Activated CD8-positive, alpha-beta T cell treated with anti-CD3 and anti-CD28 coated beads for 36 hours (primary cell): ENCODE measurements at regions of chr6 and their contacts with region 1.

Region 1: DNA sequence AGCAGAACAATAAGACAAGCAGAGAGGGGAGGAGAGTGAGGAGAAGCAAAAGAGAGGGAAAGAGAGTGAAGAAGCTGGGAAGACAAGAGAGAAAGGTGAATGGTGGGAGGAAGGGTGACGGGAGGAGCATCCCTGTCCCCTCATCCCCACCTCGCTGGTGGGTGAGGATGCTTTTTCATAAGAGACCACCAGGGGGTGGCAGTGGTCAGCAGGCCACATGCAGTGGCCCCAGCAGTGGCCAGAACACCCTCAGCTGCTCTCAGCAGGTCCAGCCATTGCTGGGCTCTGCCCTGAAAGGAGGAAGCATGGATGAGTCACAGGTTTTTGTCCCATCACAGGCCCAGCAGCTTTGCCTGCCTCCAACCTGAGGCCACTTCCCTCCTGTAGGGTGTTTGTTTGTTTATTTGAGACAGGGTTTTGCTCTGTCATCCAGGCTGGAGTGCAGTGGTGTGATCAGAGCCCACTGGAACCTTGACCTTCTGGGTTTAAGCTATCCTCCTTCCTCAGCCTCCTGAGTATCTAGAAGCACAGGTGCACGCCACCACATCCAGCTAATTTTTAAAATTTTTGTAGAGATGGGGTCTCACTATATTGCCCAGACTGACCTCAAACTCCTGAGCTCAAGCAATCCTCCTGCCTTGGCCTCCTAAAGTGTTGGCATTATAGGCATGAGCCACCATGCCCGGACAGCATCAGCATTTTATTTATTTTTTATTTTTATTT is 24.0 kb downstream of the FGD2 start:
- DNase-seq: peak; percentile 70
- ATAC-seq: peak; percentile 25
- H3K4me3 Mint-ChIP-seq: no peak overlapping the region
- H3K27ac Mint-ChIP-seq: peak overlapping the region; percentile 67
- H3K4me1 Mint-ChIP-seq: peaks cover 65% of the 10 kb centered on the region
- H3K27me3 Mint-ChIP-seq: no peaks in the 10 kb centered on the region
- CTCF ChIP-seq: peak; percentile 58

Region 2: GRCh38 chr6:36788768-36789167 is 240.6 kb before region 1 on chr6:
- CTCF ChIA-PET with region 1: no interaction called
- POLR2A ChIA-PET with region 1: no interaction called
- intact Hi-C with region 1: no loop called
- DNase-seq: peak; percentile 32
- ATAC-seq: no peak
- H3K4me3 Mint-ChIP-seq: no peak overlapping the region
- H3K27ac Mint-ChIP-seq: no peak overlapping the region
- H3K4me1 Mint-ChIP-seq: peaks cover 6% of the 10 kb centered on the region
- H3K27me3 Mint-ChIP-seq: peaks cover 9% of the 10 kb centered on the region
- CTCF ChIP-seq: no peak

Region 3: GRCh38 chr6:37190159-37190535 is 160.7 kb after region 1 on chr6:
- CTCF ChIA-PET with region 1: interaction called, 19 read pairs
- POLR2A ChIA-PET with region 1: interaction called, 4 read pairs
- intact Hi-C with region 1: no loop called
- DNase-seq: peak; percentile 52
- ATAC-seq: peak; percentile 63
- H3K4me3 Mint-ChIP-seq: no peak overlapping the region
- H3K27ac Mint-ChIP-seq: peak overlapping the region; percentile 77
- H3K4me1 Mint-ChIP-seq: peaks cover 72% of the 10 kb centered on the region
- H3K27me3 Mint-ChIP-seq: no peaks in the 10 kb centered on the region
- CTCF ChIP-seq: no peak